Transverse colon (tissue), 4 donors: ENCODE measurements at regions of chr4 and their contacts with region 1.

Region 1: GRCh38 chr4:125244848-125245450 is 69.8 kb upstream of the FAT4 start:
- DNase-seq: no peak
- H3K4me3 ChIP-seq: no peak overlapping the region
- H3K27ac ChIP-seq: no peak overlapping the region
- H3K4me1 ChIP-seq: no peaks in the 10 kb centered on the region
- H3K27me3 ChIP-seq: no peaks in the 10 kb centered on the region
- CTCF ChIP-seq: peak in 2 of 5 experiments; percentile 11 to 28
- EP300 ChIP-seq: no peak
- POLR2A ChIP-seq: no peak

Region 2: GRCh38 chr4:124372916-124373315 is 872.0 kb before region 1 on chr4:
- in situ Hi-C with region 1: loop called in 1 of 4 experiments (anchors 25 kb)
- intact Hi-C with region 1: no loop called
- DNase-seq: no peak
- H3K4me3 ChIP-seq: no peak overlapping the region
- H3K27ac ChIP-seq: no peak overlapping the region
- H3K4me1 ChIP-seq: no peaks in the 10 kb centered on the region
- H3K27me3 ChIP-seq: no peaks in the 10 kb centered on the region
- CTCF ChIP-seq: no peak
- EP300 ChIP-seq: no peak
- POLR2A ChIP-seq: no peak

Region 3: DNA sequence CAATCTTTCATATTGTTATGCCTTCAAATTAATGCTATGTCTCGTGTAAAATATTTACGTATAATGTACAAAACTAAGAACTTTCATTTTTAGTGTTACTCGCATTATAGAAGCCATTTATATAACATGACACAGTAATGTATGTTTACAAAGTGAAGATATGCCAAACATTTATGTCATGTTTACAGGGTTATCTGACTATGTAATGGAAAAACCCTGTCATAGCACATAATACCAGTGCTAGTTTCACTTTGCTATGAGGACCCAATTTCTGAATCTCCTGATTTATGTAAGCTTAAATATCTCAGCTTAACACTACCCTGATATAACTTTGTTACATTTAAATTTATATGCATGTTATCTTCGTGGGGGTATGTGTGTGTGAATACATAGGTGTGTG is 302.9 kb after region 1 on chr4:
- in situ Hi-C with region 1: no loop called
- intact Hi-C with region 1: no loop called
- DNase-seq: no peak
- H3K4me3 ChIP-seq: no peak overlapping the region
- H3K27ac ChIP-seq: no peak overlapping the region
- H3K4me1 ChIP-seq: no peaks in the 10 kb centered on the region
- H3K27me3 ChIP-seq: no peaks in the 10 kb centered on the region
- CTCF ChIP-seq: no peak
- EP300 ChIP-seq: no peak
- POLR2A ChIP-seq: no peak